GM10248 (cell line): ENCODE measurements at regions of chr3 and their contacts with region 1.

Region 1: DNA sequence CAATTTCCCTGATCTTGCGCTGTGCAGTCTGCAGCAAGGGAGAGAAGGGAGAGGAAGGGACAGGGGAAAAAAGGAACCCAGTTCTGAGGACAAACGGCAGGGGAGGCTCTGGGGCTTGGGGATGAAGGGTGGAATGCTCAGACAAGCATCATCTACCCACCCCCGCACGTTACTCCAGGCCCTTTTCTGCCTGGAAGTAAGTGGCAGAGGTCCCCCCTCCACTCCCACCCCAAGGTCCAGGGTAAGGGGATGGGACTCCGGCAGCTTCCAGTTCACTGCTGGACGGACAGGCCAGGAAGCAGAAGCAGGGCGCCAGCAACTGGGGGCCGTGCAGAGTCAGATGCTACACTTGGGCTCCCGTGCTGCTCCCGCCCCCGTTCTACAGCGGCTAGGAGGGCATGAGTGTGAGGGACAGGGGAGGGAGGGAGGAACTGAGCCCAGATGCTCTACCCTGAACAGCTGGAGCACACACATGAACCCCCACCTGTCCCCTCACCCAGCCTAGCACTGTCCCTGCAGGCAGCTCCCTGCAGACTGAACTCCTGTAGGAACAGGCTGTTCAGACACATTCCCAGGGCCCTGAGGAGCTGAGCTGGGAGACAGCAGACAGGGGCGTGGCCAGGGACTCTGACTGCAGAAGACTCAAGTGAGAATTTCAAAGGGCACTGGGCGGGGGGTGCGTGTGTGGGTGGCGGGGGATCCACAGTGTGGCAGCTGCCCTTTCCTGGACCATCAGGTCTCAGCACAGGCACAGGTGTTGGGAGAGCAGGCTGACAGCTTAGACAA is 59.7 kb downstream of the SENP2 start:
- DNase-seq: no peak
- CTCF ChIP-seq: no peak

Region 2: DNA sequence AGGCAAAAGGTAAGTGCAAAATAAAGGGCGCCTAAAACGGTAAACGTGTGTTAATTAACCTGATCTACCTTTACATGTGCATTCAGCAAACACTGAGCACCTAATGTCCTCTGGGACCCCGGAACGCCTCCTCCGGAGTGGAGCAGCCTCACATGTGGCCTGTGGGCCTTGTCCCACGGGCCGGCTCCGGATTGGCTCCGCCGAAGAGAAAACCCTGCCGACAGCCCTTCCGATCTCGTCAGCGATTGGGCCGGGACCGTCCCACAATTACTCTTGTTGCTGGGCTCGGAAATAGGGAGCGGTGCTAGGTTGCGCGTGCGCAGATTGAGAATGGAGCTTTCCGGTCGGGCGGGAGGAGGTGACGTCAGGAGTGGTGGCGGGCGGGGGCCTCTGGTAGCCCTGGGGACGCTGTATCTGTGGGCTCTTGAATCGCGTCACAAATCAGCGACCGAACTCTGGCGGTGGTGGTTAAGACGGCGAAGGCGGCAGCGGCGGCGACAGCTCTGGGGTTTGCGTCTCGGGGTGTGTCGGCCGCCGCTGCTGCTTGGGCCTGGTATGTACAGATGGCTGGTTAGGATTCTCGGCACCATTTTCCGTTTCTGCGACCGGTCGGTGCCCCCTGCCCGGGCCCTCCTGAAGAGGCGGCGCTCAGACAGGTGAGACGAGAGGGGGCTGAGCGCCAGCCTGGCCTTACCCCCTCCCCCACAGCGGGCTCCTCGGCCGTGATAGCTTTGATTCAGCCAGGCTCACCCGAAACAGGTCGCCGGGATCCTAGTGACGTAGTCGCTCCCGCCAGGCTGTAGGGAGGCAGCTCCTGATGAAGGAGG is 59.7 kb before region 1 on chr3 and contains the start of gene SENP2:
- CTCF ChIA-PET with region 1: no interaction called
- POLR2A ChIA-PET with region 1: interaction called, 14 read pairs
- DNase-seq: peak; percentile 97
- CTCF ChIP-seq: no peak